ENCODE measurements at regions of chr5 and their contacts with region 1.

Region 1: DNA sequence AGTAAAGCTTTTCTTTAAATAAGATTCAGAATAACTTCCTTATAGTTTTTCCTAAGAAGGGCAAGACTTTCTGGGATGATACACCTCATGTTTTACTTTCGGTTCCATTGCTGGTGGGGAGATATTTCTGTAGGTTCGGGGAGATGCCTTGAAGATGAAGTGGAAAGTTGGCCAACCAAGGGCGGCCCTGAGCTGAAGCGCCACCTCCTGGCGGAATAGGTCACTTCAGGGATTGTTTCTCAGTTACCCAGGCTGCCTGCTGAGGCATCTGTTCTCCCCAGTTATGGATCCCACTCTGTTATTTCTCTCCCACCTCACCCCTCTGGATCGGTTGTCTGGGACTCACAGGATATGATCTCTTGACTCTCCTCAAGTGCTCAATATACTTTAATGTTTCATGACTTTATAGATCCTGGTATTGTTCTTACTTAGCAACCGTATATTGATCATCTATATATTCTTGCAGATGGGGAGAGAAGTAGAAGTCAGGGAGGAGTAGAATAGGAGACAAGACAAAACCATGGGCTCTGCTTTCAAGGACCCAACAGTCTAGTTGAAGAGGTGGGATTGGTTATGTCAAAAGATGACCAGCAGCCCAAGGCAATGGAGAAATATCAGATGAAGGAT is 23.4 kb downstream of the MEGF10 start:
- DNase-seq: peak; percentile 33
- ATAC-seq: peak; percentile 99
- H3K4me3 ChIP-seq: no peak overlapping the region
- H3K27ac ChIP-seq: no peak overlapping the region
- H3K4me1 ChIP-seq: no peaks in the 10 kb centered on the region
- H3K27me3 ChIP-seq: no peaks in the 10 kb centered on the region
- CTCF ChIP-seq: peak; percentile 65 to 85 (median 84)
- POLR2A ChIP-seq: no peak
- RAD21 ChIP-seq: peak; percentile 82

Region 2: DNA sequence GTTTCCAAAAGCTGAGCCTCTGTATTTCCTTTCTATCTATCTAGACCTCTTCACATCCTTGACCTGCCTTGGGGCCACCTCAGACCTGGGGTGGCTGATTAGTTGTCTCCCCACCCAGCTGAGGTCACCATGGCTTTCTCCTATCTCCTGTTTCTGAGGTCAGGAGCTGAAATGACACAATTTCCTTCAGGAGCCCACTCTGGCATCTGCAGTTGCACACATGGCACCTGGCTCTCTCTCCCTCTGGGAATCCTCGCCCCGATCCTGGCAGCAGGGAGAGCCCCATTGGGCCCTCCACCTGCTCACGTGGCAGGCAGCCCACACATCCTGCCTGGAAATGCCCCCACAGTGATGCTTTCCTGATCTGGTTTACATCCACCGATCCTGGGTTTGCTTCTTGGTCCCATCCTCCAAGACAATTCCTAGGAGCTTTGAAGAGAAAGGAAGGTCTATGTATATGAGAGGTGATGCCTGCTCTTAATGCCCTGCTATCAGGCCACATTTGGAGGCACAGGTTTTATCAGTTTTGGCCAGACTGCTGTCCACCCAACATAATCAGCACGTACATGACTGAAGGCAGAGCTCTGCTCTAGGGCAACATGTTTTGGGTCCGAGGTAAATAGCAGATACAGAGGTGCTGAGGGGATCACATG is 337.3 kb before region 1 on chr5:
- CTCF ChIA-PET with region 1: no interaction called
- POLR2A ChIA-PET with region 1: no interaction called
- RAD21 ChIA-PET with region 1: no interaction called
- intact Hi-C with region 1: no loop called
- DNase-seq: no peak
- ATAC-seq: no peak
- H3K4me3 ChIP-seq: no peak overlapping the region
- H3K27ac ChIP-seq: no peak overlapping the region
- H3K4me1 ChIP-seq: no peaks in the 10 kb centered on the region
- H3K27me3 ChIP-seq: no peaks in the 10 kb centered on the region
- CTCF ChIP-seq: no peak
- POLR2A ChIP-seq: no peak
- RAD21 ChIP-seq: no peak

Region 3: DNA sequence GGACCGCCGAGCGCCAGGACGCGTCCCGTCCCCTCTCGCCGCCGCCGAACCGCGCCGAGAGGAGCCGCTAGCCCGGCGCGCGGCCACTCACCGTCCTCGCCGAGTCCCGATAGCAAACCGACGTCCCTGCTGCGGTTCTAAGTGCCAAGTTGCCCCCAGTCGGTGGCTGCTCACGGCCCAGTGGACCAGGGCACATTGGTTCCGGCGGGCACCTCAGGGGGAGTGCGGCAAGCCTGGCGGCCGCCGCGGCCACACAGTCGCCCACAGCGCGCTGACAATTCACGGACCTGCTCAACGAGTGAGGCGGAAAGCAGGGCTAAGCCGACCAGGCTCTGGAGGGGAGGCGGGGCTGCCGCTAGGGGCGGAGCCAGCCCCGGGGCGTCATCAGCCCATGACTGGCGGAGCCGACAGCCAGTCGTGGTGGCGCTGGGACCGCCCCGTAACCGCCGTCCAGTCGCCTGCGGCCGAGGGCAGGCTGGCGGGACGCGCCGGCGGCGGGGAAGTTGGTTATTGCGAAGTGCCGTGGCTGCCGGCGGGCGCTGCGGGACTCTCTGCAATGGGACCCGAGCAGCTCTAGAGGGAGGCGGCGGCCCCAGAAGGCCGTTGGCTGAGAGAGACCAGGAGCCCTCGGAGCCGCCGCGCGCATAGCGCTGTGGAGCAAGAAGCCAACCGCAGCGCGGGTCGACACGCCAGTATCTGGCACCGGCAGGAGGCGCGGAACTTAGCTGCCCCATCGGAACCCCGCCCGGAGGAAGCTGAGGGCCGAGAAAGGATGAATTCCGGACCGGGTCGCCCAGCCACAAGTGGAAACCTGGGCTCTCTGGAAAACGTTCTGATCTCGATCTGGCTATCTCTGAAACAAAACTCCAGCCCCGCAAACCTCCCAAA is 283.5 kb before region 1 on chr5 and contains the start of gene MARCHF3:
- CTCF ChIA-PET with region 1: no interaction called
- POLR2A ChIA-PET with region 1: no interaction called
- RAD21 ChIA-PET with region 1: no interaction called
- intact Hi-C with region 1: loop called (anchors 10 kb)
- DNase-seq: peak; percentile 85
- ATAC-seq: peak; percentile 95
- H3K4me3 ChIP-seq: peak within 1 kb of the TSS; percentile 62 to 81
- H3K27ac ChIP-seq: peak within 1 kb of the TSS; percentile 52
- H3K4me1 ChIP-seq: peaks cover 0 to 6% of the 10 kb centered on the region in 2 experiments; a peak in 1 of 4 replicates
- H3K27me3 ChIP-seq: no peaks in the 10 kb centered on the region
- CTCF ChIP-seq: peak in 2 of 3 experiments; percentile 18 to 22; a peak in 3 of 6 replicates
- POLR2A ChIP-seq: peak; percentile 86
- RAD21 ChIP-seq: no peak
- total RNA-seq, gene MARCHF3: 2.3 TPM

Region 4: GRCh38 chr5:127206320-127207113 is 107.4 kb before region 1 on chr5:
- CTCF ChIA-PET with region 1: no interaction called
- POLR2A ChIA-PET with region 1: no interaction called
- RAD21 ChIA-PET with region 1: no interaction called
- intact Hi-C with region 1: no loop called
- DNase-seq: peak; percentile 26
- ATAC-seq: peak; percentile 75
- H3K4me3 ChIP-seq: no peak overlapping the region
- H3K27ac ChIP-seq: no peak overlapping the region
- H3K4me1 ChIP-seq: peaks cover 7 to 9% of the 10 kb centered on the region in 2 experiments; a peak in 3 of 4 replicates
- H3K27me3 ChIP-seq: no peaks in the 10 kb centered on the region
- CTCF ChIP-seq: no peak
- POLR2A ChIP-seq: no peak
- RAD21 ChIP-seq: no peak

Measured in HCT116 (cell line).